Common myeloid progenitor, CD34-positive (primary cell): ENCODE measurements at regions of chr22 and their contacts with region 1.

Region 1: DNA sequence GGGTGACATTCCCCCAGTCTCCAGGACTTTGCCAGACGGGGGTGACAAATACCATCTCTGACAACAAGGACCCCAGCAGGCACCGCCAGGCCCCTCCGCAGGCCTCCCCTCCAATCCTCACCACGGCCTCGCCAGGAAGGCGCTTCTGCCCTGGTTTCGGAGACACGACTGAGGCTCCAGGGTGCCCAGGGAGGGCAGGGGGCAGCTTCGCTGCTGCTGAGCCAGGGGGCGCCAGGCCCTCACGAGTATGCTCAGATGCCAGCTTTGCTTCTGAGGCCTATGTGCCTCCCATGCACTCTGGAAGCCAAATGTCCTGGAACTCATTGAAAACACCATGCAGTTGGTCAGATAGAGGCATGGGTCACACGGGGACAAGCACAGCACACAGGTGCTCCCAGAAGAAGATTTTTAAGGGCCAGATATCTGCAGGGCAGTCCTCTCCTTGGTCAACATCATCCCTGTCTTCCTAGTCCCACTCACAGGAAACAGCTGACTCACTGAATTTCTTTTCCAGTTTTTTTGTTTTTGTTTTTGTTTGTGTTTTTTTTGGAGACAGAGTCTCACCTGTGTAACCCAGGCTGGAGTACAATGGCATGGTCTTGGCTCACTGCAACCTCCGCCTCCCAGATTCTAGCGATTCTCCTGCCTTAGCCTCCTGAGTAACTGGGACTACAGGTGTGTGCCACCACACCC is 19.9 kb downstream of the BID start:
- DNase-seq: peak; percentile 38 to 65 (median 64)
- H3K4me3 ChIP-seq: no peak overlapping the region
- H3K27ac ChIP-seq: no peak overlapping the region
- H3K4me1 ChIP-seq: no peaks in the 10 kb centered on the region
- H3K27me3 ChIP-seq: no peaks in the 10 kb centered on the region

Region 2: DNA sequence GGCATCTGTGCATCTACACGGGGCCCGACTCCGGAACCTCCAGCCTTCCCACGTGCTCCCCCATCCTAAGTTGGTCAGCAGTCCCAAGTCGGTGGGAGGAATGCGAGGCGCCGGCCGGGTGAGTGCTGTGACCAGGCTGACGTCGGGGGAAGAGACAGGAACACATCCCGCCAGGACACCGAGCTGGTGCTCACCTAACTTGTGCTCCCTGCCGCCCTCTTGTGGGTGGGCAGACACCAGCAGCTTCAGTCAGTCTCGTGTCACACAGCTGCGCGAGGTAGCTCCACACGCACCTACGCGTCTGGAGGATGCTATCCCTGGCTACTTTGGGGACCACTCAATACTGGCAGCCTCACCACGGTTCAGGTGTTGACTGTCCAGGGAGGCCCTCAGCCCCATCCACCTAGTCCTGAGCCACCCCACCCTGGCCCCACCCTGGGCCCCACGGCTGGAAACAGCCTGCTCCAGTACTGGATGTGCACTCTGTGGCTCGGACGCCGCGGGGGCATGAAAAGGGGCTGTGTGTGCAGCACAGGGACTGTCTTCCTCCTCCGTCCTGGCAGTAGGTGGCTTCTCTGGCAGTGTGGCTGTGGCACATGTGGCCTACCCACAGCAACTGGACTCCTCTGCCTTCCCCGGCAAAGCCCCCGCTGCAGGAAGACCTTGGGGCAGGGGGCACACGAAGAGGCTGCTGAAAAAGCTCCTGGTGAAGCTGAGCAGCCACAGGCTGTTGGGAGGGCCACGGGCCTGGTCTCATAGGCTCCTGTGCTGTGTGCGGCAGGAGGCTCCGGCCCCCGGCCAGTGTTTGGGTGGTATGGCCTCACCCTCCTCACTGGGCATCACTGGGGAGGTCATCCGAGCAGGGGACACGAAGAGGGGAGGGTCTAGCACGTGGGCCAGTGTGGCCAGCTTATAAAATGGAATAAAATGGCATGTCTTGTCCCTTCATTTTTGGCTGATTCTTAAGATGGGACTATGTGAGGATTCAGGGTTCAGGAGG is 31.1 kb after region 1 on chr22:
- CTCF ChIA-PET with region 1: interaction called, 36 read pairs
- POLR2A ChIA-PET with region 1: no interaction called
- DNase-seq: peak; percentile 53 to 76 (median 65)
- H3K4me3 ChIP-seq: no peak overlapping the region
- H3K27ac ChIP-seq: peak overlapping the region in 1 of 2 experiments; percentile 14
- H3K4me1 ChIP-seq: peaks cover 0 to 40% (median 34%) of the 10 kb centered on the region in 4 experiments
- H3K27me3 ChIP-seq: no peaks in the 10 kb centered on the region